ENCODE measurements at regions of chr14 and their contacts with region 1.

Region 1: GRCh38 chr14:80055667-80056496 is 155.4 kb downstream of the DIO2 start:
- DNase-seq: peak; percentile 62 to 63
- H3K4me3 ChIP-seq: no peak overlapping the region
- H3K27ac ChIP-seq: no peak overlapping the region
- H3K4me1 ChIP-seq: peaks cover 5 to 9% of the 10 kb centered on the region in 2 donors
- H3K27me3 ChIP-seq: no peaks in the 10 kb centered on the region
- CTCF ChIP-seq: peak; percentile 36 to 90 (median 78)
- POLR2A ChIP-seq: no peak

Region 2: GRCh38 chr14:80356413-80356812 is 300.5 kb after region 1 on chr14:
- intact Hi-C with region 1: loop called (anchors 10 kb)
- DNase-seq: peak in 1 of 2 donors; percentile 23
- H3K4me3 ChIP-seq: no peak overlapping the region
- H3K27ac ChIP-seq: no peak overlapping the region
- H3K4me1 ChIP-seq: no peaks in the 10 kb centered on the region
- H3K27me3 ChIP-seq: no peaks in the 10 kb centered on the region
- CTCF ChIP-seq: peak in 3 of 6 experiments; percentile 28 to 38 (median 36)
- POLR2A ChIP-seq: no peak

Measured in thyroid gland (tissue), 4 donors.